ENCODE measurements at regions of chr1 and their contacts with region 1.

Region 1: DNA sequence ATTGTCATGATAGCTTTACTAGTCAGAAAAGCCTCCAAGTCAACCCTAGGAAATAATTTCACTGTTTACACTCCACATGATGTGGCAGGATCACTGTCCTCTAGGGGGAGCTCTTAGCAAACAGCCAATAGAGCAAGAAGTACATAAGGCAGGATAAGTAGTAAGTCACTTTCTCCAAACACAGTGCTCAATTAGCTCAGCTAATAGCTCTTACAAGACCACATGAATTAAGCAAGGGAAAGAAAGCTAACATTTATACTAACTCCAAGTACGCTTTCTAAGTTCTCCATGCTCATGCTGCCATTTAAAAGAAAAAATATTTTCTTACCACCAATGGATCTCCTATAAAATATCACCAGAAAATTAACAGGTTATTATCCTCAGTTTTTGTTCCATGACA is 66.9 kb upstream of the LRIF1 start:
- DNase-seq: peak; percentile 49
- H3K4me3 ChIP-seq: no peak overlapping the region
- H3K27ac ChIP-seq: no peak overlapping the region
- H3K4me1 ChIP-seq: no peaks in the 10 kb centered on the region
- H3K27me3 ChIP-seq: no peaks in the 10 kb centered on the region
- CTCF ChIP-seq: peak; percentile 87 to 91

Region 2: GRCh38 chr1:110605901-110606656 is 424.5 kb before region 1 on chr1 and contains the start of gene KCNA2:
- CTCF ChIA-PET with region 1: no interaction called
- dilution Hi-C with region 1: no loop called
- in situ Hi-C with region 1: no loop called
- intact Hi-C with region 1: no loop called
- DNase-seq: no peak
- H3K4me3 ChIP-seq: peak within 1 kb of the TSS in 1 of 3 experiments; percentile 21
- H3K27ac ChIP-seq: no peak within 1 kb of the TSS
- H3K4me1 ChIP-seq: peaks cover 4% of the 10 kb centered on the region
- H3K27me3 ChIP-seq: peaks cover 38% of the 10 kb centered on the region
- CTCF ChIP-seq: no peak
- total RNA-seq, gene KCNA2: 0.17 TPM in 1 of 2 donors, not detected in the other

Region 3: DNA sequence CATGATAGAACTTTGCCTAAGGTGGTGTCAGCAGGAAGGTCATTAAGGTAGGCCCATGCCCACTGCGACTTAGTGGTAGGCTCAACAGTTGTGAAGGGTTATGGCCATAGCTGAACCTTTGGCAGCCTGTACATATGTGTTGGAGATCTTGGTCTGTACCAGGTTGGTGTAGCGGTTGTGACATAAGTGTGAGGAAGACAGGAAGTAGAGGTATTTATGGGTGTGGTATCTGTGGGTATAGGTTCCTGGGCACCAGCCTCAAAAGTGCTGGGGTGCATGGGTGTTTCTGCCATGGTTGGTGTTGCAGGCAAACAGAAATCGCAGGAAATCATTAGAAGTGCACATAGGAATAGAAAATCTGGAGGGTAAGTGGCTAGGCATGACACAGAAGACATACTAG is 48.3 kb before region 1 on chr1:
- CTCF ChIA-PET with region 1: no interaction called
- dilution Hi-C with region 1: no loop called
- in situ Hi-C with region 1: no loop called
- intact Hi-C with region 1: no loop called
- DNase-seq: no peak
- H3K4me3 ChIP-seq: no peak overlapping the region
- H3K27ac ChIP-seq: no peak overlapping the region
- H3K4me1 ChIP-seq: peaks cover 11% of the 10 kb centered on the region
- H3K27me3 ChIP-seq: peaks cover 3% of the 10 kb centered on the region
- CTCF ChIP-seq: no peak

Region 4: DNA sequence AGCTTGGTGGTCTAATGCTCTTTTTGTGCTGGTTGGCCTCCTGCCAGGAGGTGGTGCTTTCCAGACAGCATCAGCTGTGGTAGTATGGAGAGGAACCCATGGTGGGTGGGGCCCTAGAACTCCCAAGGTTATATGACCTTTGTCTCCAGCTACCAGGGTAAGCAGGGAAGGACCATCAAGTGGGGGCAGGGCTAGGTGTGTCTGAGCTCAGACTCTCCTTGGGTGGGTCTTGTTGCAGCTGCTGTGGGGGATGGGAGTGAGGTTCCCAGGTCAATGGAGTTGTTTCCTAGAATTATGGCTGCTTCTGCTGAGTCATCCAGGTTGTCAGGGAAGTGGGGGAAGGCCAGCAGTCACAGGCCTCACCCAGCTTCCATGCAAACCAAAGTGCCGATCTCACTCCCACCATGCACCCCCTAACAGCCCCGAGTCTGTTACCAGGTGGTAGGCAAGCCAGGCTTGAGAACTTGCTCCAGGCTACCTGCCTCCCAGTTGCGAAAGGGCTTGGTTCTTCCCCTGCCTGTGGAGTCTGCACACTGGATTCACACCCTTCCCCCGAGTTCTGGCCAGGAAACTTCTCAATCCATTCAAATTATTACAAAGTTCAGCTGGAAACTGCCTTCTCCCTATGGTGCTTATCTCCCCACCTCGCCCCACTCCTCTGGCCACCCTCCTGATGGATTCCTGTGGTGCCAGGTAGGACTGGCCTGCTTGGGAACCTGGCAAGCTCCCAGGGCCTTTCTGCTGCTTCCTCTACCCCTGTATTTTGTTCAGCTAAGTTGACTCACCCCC is 71.5 kb after region 1 on chr1:
- CTCF ChIA-PET with region 1: no interaction called
- dilution Hi-C with region 1: no loop called
- in situ Hi-C with region 1: no loop called
- intact Hi-C with region 1: no loop called
- DNase-seq: peak; percentile 20
- H3K4me3 ChIP-seq: no peak overlapping the region
- H3K27ac ChIP-seq: no peak overlapping the region
- H3K4me1 ChIP-seq: peaks cover 9% of the 10 kb centered on the region
- H3K27me3 ChIP-seq: no peaks in the 10 kb centered on the region
- CTCF ChIP-seq: no peak

Region 5: GRCh38 chr1:111139956-111140679 is 109.5 kb after region 1 on chr1 and contains the starts of genes CEPT1 and DRAM2:
- CTCF ChIA-PET with region 1: no interaction called
- dilution Hi-C with region 1: no loop called
- in situ Hi-C with region 1: no loop called
- intact Hi-C with region 1: loop called (anchors 1 kb)
- DNase-seq: peak; percentile 95
- H3K4me3 ChIP-seq: peak within 1 kb of the TSS; percentile 70 to 77 (median 73)
- H3K27ac ChIP-seq: peak within 1 kb of the TSS; percentile 67
- H3K4me1 ChIP-seq: peaks cover 13% of the 10 kb centered on the region
- H3K27me3 ChIP-seq: no peaks in the 10 kb centered on the region
- CTCF ChIP-seq: no peak
- total RNA-seq, gene CEPT1: 41.0 to 54.8 TPM
- total RNA-seq, gene DRAM2: 33.7 to 90.4 TPM

Region 6: DNA sequence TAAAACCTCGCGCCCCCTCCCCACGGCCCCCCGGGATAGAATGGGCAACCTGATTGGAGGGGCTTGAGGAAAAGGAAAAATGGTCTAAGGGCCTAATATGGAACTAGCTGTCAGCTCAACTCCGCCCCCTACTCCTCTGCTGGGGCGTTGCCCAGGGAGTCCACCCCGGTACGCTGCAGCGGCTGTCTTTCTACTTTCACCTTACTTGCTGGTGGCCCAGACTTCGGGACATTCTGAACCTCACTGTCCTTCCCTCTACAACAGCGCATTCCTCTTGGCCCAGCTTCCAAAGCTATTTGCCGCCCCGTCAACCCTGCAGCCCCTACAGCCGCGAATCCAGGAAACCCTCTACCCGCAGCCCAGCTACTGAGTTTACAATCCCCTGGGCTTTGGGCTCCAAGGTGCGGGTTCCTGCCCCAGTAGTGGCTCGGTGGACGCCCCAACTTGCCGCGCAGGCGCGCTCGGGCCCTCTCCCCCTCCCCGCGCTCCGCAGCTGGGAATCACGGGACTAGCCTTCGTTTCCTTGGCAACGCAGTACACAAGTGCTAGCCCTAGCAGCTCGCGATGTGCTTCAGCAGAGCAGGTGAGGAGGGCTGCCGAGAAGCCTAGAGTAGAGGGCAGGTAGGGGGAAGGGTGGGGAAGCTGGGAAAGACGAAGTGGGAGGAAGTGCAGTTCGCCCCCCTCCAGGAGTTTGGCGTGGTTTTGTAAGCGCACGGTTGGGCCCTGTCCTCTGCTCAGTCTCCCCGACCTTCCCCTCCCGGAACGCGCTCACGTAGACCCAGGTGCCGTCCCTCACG is 315.7 kb after region 1 on chr1:
- CTCF ChIA-PET with region 1: no interaction called
- dilution Hi-C with region 1: no loop called
- in situ Hi-C with region 1: loop called in 1 of 2 experiments (anchors 25 kb)
- intact Hi-C with region 1: no loop called
- DNase-seq: peak; percentile 66
- H3K4me3 ChIP-seq: peak overlapping the region; percentile 47 to 63 (median 50)
- H3K27ac ChIP-seq: peak overlapping the region; percentile 30
- H3K4me1 ChIP-seq: peaks cover 9% of the 10 kb centered on the region
- H3K27me3 ChIP-seq: no peaks in the 10 kb centered on the region
- CTCF ChIP-seq: peak in 1 of 2 donors; percentile 31